ENCODE measurements at regions of chr2 and their contacts with region 1.

Region 1: GRCh38 chr2:224284134-224284946 is 117.6 kb downstream of the FAM124B start:
- DNase-seq: peak; percentile 45
- H3K4me3 ChIP-seq: no peak overlapping the region
- H3K27ac ChIP-seq: no peak overlapping the region
- H3K4me1 ChIP-seq: no peaks in the 10 kb centered on the region
- H3K27me3 ChIP-seq: no peaks in the 10 kb centered on the region

Region 2: GRCh38 chr2:223720367-223720766 is 564.0 kb before region 1 on chr2:
- in situ Hi-C with region 1: no loop called
- DNase-seq: no peak
- H3K4me3 ChIP-seq: no peak overlapping the region
- H3K27ac ChIP-seq: no peak overlapping the region
- H3K4me1 ChIP-seq: peaks cover 13% of the 10 kb centered on the region
- H3K27me3 ChIP-seq: no peaks in the 10 kb centered on the region

Region 3: GRCh38 chr2:223993621-223994232 is 290.6 kb before region 1 on chr2:
- in situ Hi-C with region 1: loop called (anchors 10 kb)
- DNase-seq: peak; percentile 85
- H3K4me3 ChIP-seq: no peak overlapping the region
- H3K27ac ChIP-seq: peak overlapping the region; percentile 71
- H3K4me1 ChIP-seq: peaks cover 27% of the 10 kb centered on the region; the same call in 1 of the 2 replicates
- H3K27me3 ChIP-seq: no peaks in the 10 kb centered on the region

Measured in GM23248 (cell line).